Thyroid gland (tissue), 4 donors: ENCODE measurements at regions of chrX and their contacts with region 1.

Region 1: GRCh38 chrX:103175944-103176753 is 38.8 kb upstream of the BEX4 start:
- DNase-seq: peak; percentile 56 to 61
- H3K4me3 ChIP-seq: no peak overlapping the region
- H3K27ac ChIP-seq: no peak overlapping the region
- H3K4me1 ChIP-seq: no peaks in the 10 kb centered on the region
- H3K27me3 ChIP-seq: no peaks in the 10 kb centered on the region
- CTCF ChIP-seq: peak in 4 of 6 experiments; percentile 51 to 67 (median 62)
- POLR2A ChIP-seq: no peak

Region 2: DNA sequence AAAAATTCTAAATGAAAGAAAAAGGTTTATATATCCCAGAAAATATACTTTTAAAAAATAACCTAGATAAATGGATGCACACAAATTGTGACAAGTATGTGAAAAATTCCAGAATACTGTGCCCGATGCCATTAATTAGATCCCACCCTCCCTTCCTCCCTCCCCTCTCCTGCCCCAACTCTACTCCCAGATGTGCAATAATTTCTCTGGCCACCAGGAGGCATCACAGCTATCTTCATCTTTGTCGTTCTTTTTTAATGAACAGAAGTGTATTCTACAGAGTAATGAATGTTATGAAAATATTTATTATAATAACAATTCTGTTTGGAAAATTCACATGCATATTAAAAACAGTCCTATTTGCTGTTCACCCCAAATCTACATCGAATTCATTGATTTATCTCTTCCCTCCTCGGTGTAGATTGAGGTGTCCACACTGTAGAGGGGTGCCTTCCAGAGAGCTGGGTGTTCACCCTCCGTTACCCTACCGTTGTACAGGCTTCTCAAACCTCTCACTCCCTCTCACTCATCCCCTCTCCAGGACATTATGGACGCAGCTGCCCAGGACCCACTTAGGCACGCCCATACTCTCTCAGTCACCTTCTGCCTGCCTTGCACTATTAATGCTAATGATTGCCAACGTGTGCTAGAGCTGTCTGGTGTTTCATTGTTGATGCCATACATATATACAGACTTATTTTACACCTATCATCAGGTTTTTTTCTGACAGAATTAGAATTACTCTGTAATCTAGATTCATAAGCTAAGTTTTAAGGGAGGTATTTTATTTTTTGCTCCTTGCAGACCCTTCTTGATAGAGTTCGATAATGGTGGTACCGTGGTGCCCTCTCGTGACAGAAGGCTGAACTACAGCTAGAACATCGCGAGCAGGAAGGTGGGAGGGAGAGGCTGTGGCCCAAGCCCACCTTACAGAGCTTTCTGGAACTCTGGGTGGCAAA is 225.0 kb before region 1 on chrX:
- intact Hi-C with region 1: loop called (anchors 10 kb)
- DNase-seq: peak; percentile 37 to 51
- H3K4me3 ChIP-seq: no peak overlapping the region
- H3K27ac ChIP-seq: no peak overlapping the region
- H3K4me1 ChIP-seq: no peaks in the 10 kb centered on the region
- H3K27me3 ChIP-seq: no peaks in the 10 kb centered on the region
- CTCF ChIP-seq: peak; percentile 9 to 56 (median 36)
- POLR2A ChIP-seq: no peak

Region 3: GRCh38 chrX:103081051-103081450 is 95.1 kb before region 1 on chrX:
- intact Hi-C with region 1: no loop called
- DNase-seq: no peak
- H3K4me3 ChIP-seq: no peak overlapping the region
- H3K27ac ChIP-seq: no peak overlapping the region
- H3K4me1 ChIP-seq: no peaks in the 10 kb centered on the region
- H3K27me3 ChIP-seq: no peaks in the 10 kb centered on the region
- CTCF ChIP-seq: no peak
- POLR2A ChIP-seq: no peak